ENCODE measurements at regions of chr1 and their contacts with region 1.

Region 1: GRCh38 chr1:94384485-94385265 is 33.5 kb upstream of the ABCD3 start:
- DNase-seq: peak; percentile 13
- H3K4me3 Mint-ChIP-seq: peak overlapping the region; percentile 61
- H3K27ac Mint-ChIP-seq: peak overlapping the region; percentile 95
- H3K4me1 Mint-ChIP-seq: peaks cover 49% of the 10 kb centered on the region
- H3K27me3 Mint-ChIP-seq: no peaks in the 10 kb centered on the region

Region 2: GRCh38 chr1:94351485-94351884 is 33.2 kb before region 1 on chr1:
- intact Hi-C with region 1: loop called (anchors 5 kb)
- DNase-seq: no peak
- H3K4me3 Mint-ChIP-seq: no peak overlapping the region
- H3K27ac Mint-ChIP-seq: no peak overlapping the region
- H3K4me1 Mint-ChIP-seq: peaks cover 7% of the 10 kb centered on the region
- H3K27me3 Mint-ChIP-seq: no peaks in the 10 kb centered on the region

Region 3: DNA sequence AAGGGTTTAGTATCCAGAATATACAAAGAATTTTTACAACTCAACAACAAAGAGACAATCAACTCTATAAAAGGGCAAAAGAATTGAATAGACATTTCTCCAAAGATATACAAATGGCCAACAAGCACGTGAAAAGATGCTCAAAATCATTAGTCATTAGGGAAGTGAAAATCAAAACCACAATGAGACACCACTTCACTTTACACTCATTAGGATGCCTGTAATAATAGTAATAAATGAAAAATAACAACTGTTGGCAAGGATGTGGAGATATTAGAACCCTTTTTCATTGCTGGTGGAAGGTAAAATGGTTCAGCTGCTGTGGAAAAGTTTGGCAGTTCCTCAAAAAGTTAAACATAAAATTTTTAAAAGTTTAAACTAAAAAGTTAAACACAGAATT is 26.6 kb after region 1 on chr1:
- intact Hi-C with region 1: no loop called
- DNase-seq: no peak
- H3K4me3 Mint-ChIP-seq: no peak overlapping the region
- H3K27ac Mint-ChIP-seq: no peak overlapping the region
- H3K4me1 Mint-ChIP-seq: peaks cover 10% of the 10 kb centered on the region
- H3K27me3 Mint-ChIP-seq: peaks cover 14% of the 10 kb centered on the region

Measured in activated T-helper 2 cell treated with anti-CD3 and anti-CD28 coated beads, Interferon-gamma antibody, Interleukin-2, Interleukin-4, amounts not matched to agents 10 μg/mL and 5 μg/mL and 100 μg/mL, durations not matched to agents 14 hours and 24 hours and 36 hours (primary cell).